Endothelial cell of umbilical vein (primary cell): ENCODE measurements at regions of chr11 and their contacts with region 1.

Region 1: DNA sequence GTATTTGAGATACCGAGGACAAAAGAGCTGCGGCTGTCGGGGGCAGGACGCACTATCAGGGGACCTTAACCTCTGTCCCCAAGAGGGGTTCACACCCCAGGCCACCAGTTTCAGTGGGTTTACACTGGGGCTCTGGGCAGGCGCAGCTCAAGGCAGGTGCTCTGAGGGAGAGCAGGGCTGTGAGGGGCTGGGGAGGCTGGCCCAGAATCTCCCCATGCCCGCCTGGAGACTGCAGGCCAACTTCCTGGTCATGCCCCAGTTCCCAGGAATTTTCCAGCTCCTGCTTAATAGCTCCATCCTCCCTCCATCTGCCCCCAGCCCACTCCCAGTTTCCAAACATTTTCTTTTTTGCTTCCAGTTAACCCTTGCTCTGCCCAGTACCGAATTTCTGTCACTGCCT is 7.6 kb upstream of the PGA3 start:
- DNase-seq: no peak
- H3K4me3 ChIP-seq: no peak overlapping the region
- H3K27ac ChIP-seq: no peak overlapping the region
- H3K4me1 ChIP-seq: no peaks in the 10 kb centered on the region
- H3K27me3 ChIP-seq: no peaks in the 10 kb centered on the region
- CTCF ChIP-seq: no peak
- POLR2A ChIP-seq: no peak

Region 2: DNA sequence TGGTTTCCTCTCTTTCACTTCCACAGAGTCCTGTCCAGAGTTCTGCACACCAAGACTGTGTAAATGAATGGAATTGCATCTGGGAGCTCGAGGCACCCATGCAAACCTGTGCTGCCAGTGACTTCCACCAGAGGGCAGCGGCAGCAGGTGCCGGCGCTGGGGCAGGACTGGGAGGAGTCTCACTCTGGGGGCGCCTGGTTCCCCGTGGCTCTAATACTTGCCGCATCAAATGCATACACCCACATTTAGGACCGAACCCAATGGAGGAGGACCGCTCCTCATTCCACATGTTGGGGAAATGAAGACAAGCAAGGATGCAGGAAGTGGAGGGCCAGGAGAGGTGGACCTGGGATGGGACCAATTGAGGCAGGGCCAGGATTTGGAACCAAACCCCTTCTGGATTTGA is 225.3 kb before region 1 on chr11:
- CTCF ChIA-PET with region 1: interaction called, 3 read pairs
- POLR2A ChIA-PET with region 1: no interaction called
- dilution Hi-C with region 1: no loop called
- intact Hi-C with region 1: loop called (anchors 2 kb)
- DNase-seq: peak; percentile 36
- H3K4me3 ChIP-seq: no peak overlapping the region
- H3K27ac ChIP-seq: no peak overlapping the region
- H3K4me1 ChIP-seq: no peaks in the 10 kb centered on the region
- H3K27me3 ChIP-seq: peaks cover 3 to 8% of the 10 kb centered on the region in 2 experiments
- CTCF ChIP-seq: peak; percentile 82
- POLR2A ChIP-seq: no peak

Region 3: GRCh38 chr11:61141601-61142028 is 54.1 kb before region 1 on chr11:
- CTCF ChIA-PET with region 1: no interaction called
- POLR2A ChIA-PET with region 1: no interaction called
- dilution Hi-C with region 1: no loop called
- intact Hi-C with region 1: no loop called
- DNase-seq: no peak
- H3K4me3 ChIP-seq: no peak overlapping the region
- H3K27ac ChIP-seq: no peak overlapping the region
- H3K4me1 ChIP-seq: no peaks in the 10 kb centered on the region
- H3K27me3 ChIP-seq: no peaks in the 10 kb centered on the region
- CTCF ChIP-seq: no peak
- POLR2A ChIP-seq: no peak